H1 (cell line): ENCODE measurements at regions of chr1 and their contacts with region 1.

Region 1: DNA sequence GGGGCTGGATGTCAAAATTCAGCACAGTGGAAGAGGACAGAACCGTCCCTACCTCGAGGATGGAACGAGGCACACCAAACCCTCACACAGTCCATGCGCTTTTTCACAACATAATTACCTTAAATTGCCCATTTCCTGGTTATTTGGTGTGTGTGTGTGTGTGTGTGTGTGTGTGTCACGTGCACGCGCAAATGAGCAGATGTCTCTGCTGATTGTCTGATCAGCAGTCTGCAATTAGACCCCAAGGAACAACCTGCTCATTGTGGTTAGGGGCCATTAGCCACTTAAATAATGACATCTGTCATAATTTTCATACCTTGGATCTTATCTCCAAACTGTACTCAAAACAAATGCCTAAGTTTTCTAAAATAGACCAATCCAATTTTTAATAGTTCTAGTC is 23.2 kb downstream of the AVPR1B start:
- DNase-seq: no peak
- H3K4me3 ChIP-seq: no peak overlapping the region
- H3K27ac ChIP-seq: no peak overlapping the region
- H3K4me1 ChIP-seq: no peaks in the 10 kb centered on the region; a peak in 1 of 7 replicates
- H3K27me3 ChIP-seq: no peaks in the 10 kb centered on the region
- CTCF ChIP-seq: no peak
- EP300 ChIP-seq: no peak
- POLR2A ChIP-seq: no peak
- RAD21 ChIP-seq: no peak

Region 2: GRCh38 chr1:206106328-206107167 is 12.5 kb after region 1 on chr1:
- CTCF ChIA-PET with region 1: interaction called, 31 read pairs
- POLR2A ChIA-PET with region 1: no interaction called
- DNase-seq: peak; percentile 47 to 91
- H3K4me3 ChIP-seq: no peak overlapping the region
- H3K27ac ChIP-seq: no peak overlapping the region
- H3K4me1 ChIP-seq: no peaks in the 10 kb centered on the region
- H3K27me3 ChIP-seq: no peaks in the 10 kb centered on the region
- CTCF ChIP-seq: peak; percentile 92 to 95 (median 93)
- EP300 ChIP-seq: no peak
- POLR2A ChIP-seq: no peak
- RAD21 ChIP-seq: peak; percentile 93 to 96

Region 3: DNA sequence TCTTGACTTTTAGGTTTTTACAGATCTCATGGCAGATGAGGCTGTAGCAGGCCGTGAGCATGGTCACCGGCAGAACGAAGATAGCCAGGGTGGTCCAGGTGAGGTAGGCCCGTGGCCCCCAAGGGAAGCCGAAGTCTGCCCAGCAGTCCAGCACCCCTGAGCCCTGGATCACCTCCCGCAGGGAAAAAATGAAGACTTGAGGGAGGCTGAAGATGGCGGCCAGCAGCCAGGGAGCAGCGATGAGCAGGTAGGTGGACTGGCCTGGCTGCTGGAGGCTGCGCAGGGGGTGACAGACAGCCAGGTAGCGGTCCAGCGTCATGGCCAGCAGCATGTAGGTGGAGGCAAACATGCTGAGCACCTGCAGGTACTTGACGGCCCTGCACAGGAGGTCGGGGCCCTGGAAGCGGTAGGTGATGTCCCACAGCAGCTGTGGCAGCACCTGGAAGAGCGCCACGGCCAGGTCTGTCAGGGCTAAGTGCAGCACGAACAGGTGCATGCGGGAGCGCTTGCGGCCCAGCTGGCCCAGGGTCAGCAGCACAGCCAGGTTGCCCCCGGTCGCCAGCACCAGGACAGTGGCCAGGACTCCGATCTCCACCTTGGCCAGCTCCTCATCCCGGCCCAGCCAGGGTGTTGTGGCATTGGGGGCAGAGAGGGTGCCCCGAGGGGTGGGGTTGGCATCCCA is 22.3 kb after region 1 on chr1:
- CTCF ChIA-PET with region 1: interaction called, 10 read pairs
- POLR2A ChIA-PET with region 1: interaction called, 3 read pairs
- DNase-seq: peak in 1 of 2 experiments; percentile 45
- H3K4me3 ChIP-seq: peak overlapping the region in 2 of 4 experiments; percentile 50 to 69; a peak in 5 of 8 replicates
- H3K27ac ChIP-seq: no peak overlapping the region
- H3K4me1 ChIP-seq: peaks cover 0 to 3% (median 2%) of the 10 kb centered on the region in 4 experiments; a peak in 3 of 7 replicates
- H3K27me3 ChIP-seq: peaks cover 3 to 26% (median 24%) of the 10 kb centered on the region in 4 experiments
- CTCF ChIP-seq: no peak
- EP300 ChIP-seq: no peak
- POLR2A ChIP-seq: no peak
- RAD21 ChIP-seq: no peak

Region 4: DNA sequence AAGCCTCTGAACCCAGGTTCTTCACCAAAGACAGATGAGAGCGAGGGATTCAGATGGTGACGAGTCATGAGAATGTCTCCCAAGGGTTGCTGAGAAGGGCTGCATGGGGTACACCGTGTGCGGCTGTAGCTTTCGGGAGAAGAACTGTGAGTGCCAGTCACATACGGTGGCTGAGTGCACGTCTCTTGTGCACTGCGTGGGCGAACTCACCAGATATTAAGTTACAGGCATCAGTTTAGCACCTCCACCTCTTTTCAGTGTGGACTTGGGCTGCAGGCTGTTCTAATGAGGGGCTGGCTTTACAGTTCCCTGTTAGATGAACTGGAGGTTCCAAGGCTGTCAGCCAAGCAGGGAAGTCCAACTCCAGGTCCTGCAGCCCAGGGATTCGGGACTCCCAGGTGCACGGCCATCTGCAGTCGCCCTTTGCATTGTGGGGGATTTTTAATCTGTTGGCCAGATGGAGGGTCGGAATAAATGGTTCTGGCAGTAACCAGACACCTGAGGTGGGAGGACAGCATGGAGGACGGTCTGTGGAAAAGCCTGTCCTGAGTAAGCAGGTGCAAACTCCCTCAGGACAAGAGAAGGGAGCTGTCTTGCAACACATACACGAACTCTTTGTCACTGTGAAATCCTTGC is 49.6 kb after region 1 on chr1:
- CTCF ChIA-PET with region 1: no interaction called
- POLR2A ChIA-PET with region 1: no interaction called
- DNase-seq: no peak
- H3K4me3 ChIP-seq: no peak overlapping the region
- H3K27ac ChIP-seq: no peak overlapping the region
- H3K4me1 ChIP-seq: no peaks in the 10 kb centered on the region
- H3K27me3 ChIP-seq: no peaks in the 10 kb centered on the region
- CTCF ChIP-seq: no peak
- EP300 ChIP-seq: no peak
- POLR2A ChIP-seq: no peak
- RAD21 ChIP-seq: no peak